ENCODE measurements at regions of chr12 and their contacts with region 1.

Region 1: DNA sequence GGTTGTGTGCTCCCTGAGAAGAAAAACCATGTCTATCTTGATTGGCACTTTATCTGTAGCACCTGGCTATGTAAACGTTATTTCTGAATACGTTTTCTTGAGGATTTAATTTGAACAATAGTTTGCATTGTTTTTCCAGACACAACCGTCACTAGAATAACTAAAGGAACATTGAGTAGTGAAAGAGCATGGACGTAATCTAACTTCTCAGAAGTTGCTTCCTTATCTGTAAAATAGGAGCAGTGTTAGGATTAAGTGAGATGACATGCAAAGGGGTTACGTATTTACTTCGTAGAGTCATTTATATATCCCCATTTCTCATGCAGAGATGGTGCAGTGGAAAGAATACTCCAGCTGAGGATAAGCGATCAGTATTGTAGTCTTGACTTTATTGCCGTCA is 8.1 kb downstream of the AEBP2 start:
- DNase-seq: no peak
- ATAC-seq: no peak
- H3K4me3 ChIP-seq: no peak overlapping the region
- H3K27ac ChIP-seq: no peak overlapping the region
- H3K4me1 ChIP-seq: peaks cover 1 to 4% of the 10 kb centered on the region in 2 donors
- H3K27me3 ChIP-seq: no peaks in the 10 kb centered on the region

Region 2: GRCh38 chr12:19482551-19483109 is 35.2 kb after region 1 on chr12:
- intact Hi-C with region 1: loop called in 1 of 2 experiments (anchors 5 kb)
- DNase-seq: peak in 1 of 2 donors; percentile 67
- ATAC-seq: peak; percentile 69
- H3K4me3 ChIP-seq: no peak overlapping the region
- H3K27ac ChIP-seq: peak overlapping the region in 1 of 2 donors; percentile 23
- H3K4me1 ChIP-seq: peaks cover 2 to 10% of the 10 kb centered on the region in 2 donors
- H3K27me3 ChIP-seq: no peaks in the 10 kb centered on the region

Measured in aorta (tissue), 5 donors.